Aorta (tissue), 5 donors: ENCODE measurements at regions of chr1 and their contacts with region 1.

Region 1: DNA sequence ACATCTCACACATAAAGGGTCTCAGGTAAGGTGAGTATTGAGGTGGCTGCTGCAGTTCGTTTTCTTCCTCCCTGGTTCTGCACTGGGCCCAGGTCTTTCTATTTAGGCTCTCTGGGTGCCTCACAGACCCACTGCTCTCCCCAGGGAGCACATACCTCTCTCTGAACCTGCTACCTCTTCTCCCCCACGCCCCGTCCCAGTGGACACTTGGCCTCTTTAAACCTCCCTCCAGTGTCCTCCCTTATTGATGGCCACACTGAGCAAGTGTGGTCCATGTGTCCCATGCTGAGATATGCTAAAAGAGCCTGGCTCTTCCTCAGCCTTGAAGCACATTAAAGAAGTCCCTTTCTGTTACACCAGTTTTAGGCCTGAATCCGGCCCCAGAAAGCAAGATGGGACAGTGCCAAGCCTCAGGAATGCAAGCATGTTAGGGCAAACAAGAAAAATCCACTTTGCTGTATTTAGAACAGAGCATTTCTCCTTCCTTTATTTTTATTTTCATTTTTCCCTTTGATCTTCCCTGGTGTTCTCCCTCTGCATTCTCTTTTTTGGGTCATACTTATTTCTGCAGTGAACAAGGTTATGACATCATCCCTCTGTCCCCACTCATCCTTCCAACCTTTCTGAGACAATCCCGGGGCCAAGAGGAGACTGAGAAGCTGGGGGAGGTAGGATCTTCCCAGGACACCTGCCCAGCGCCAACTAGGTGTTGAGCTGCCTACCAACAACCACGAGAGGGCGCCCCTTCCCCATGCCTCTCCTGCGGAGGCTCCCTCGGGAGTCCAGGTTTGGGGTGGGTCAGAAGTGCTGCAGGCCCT is 5.0 kb upstream of the CHI3L2 start:
- DNase-seq: peak; percentile 73 to 92
- ATAC-seq: peak; percentile 87
- H3K4me3 ChIP-seq: no peak overlapping the region
- H3K27ac ChIP-seq: no peak overlapping the region
- H3K4me1 ChIP-seq: no peaks in the 10 kb centered on the region
- H3K27me3 ChIP-seq: no peaks in the 10 kb centered on the region

Region 2: DNA sequence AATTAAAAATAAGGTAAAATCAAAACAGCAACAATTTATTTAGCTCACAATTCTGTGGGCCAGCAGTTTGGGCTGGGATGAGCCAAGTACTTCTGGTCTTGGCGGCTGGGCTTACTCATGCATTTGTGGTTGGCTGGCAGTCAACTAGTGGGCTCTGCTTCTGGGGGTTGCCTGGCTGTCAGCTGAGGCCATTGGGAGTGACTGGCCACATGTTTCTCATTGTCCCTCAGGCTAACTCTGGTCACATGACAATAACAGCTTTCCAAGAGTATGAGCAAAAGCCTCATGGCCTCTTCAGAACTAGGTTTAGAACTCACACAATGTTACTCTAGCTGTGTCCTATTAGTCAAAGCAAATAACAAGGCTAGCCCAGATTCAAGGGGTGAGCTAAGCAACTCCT is 52.6 kb after region 1 on chr1:
- intact Hi-C with region 1: no loop called
- DNase-seq: peak in 1 of 2 donors; percentile 68
- ATAC-seq: peak; percentile 86
- H3K4me3 ChIP-seq: no peak overlapping the region
- H3K27ac ChIP-seq: no peak overlapping the region
- H3K4me1 ChIP-seq: no peaks in the 10 kb centered on the region
- H3K27me3 ChIP-seq: peaks cover 0 to 2% of the 10 kb centered on the region in 2 donors

Region 3: GRCh38 chr1:111364690-111365089 is 142.2 kb after region 1 on chr1:
- intact Hi-C with region 1: no loop called
- DNase-seq: no peak
- ATAC-seq: no peak
- H3K4me3 ChIP-seq: no peak overlapping the region
- H3K27ac ChIP-seq: no peak overlapping the region
- H3K4me1 ChIP-seq: no peaks in the 10 kb centered on the region
- H3K27me3 ChIP-seq: no peaks in the 10 kb centered on the region

Region 4: GRCh38 chr1:111399792-111400610 is 177.5 kb after region 1 on chr1:
- intact Hi-C with region 1: loop called (anchors 2 kb)
- DNase-seq: no peak
- ATAC-seq: no peak
- H3K4me3 ChIP-seq: no peak overlapping the region
- H3K27ac ChIP-seq: no peak overlapping the region
- H3K4me1 ChIP-seq: no peaks in the 10 kb centered on the region
- H3K27me3 ChIP-seq: no peaks in the 10 kb centered on the region

Region 5: DNA sequence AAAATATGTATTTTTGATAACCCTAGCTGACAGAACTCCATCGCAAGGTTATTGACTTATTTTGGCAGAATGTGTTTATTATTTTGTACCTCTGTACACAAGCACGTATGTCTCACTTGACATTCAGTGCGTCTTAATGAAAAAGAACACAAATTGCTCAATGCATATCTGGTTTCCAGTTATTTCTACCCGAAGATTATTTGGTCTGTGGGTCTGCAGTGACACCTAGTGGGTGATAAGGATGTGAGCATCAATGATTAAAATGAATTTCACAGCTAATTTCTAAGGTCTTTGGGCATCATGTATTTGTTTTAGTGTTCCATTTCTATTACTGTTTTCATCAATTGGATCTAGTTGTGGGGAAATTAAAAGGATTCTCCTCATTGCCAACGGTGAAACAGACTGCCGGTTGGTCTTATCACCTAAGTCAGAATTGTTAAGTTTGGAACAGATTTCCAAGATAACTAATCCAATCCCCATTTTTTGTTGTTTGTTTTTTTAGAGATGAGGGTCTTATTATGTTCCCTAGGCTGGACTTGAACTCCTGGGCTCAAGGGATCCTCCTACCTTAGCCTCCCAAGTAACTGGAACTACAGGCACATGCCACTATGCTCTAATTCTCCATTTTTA is 547.1 kb after region 1 on chr1:
- intact Hi-C with region 1: loop called (anchors 5 to 10 kb)
- DNase-seq: no peak
- ATAC-seq: peak; percentile 81
- H3K4me3 ChIP-seq: no peak overlapping the region
- H3K27ac ChIP-seq: no peak overlapping the region
- H3K4me1 ChIP-seq: no peaks in the 10 kb centered on the region
- H3K27me3 ChIP-seq: no peaks in the 10 kb centered on the region